Ovary (tissue), 10 donors: ENCODE measurements at regions of chr17 and their contacts with region 1.

Region 1: GRCh38 chr17:17196776-17197175 is 9.4 kb downstream of the PLD6 start:
- DNase-seq: no peak
- H3K4me3 ChIP-seq: no peak overlapping the region
- H3K27ac ChIP-seq: no peak overlapping the region
- H3K4me1 ChIP-seq: peaks cover 10% of the 10 kb centered on the region
- H3K27me3 ChIP-seq: no peaks in the 10 kb centered on the region
- CTCF ChIP-seq: no peak
- EP300 ChIP-seq: no peak
- POLR2A ChIP-seq: no peak

Region 2: GRCh38 chr17:17125136-17126084 is 71.4 kb before region 1 on chr17:
- intact Hi-C with region 1: no loop called
- DNase-seq: no peak
- H3K4me3 ChIP-seq: no peak overlapping the region
- H3K27ac ChIP-seq: no peak overlapping the region
- H3K4me1 ChIP-seq: peaks cover 6% of the 10 kb centered on the region
- H3K27me3 ChIP-seq: no peaks in the 10 kb centered on the region
- CTCF ChIP-seq: no peak
- EP300 ChIP-seq: no peak
- POLR2A ChIP-seq: no peak

Region 3: DNA sequence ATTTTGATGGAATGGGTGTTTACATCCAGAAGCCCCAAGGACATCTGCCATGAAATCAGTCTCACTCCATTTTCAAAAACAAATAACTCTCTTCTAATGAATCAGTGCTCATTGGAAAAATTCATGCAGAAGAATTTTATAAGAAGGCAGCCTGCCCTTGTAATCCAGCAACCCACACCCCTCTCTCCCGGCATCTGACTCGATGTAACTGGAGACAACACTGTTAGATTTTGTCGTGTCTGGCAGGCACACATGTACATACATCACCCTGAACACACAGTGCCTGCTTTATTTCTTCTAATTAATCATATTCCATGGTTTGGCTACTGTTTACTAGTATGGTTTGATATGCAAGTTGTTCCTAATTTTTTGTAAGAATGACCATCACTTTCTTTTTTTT is 21.2 kb after region 1 on chr17:
- intact Hi-C with region 1: loop called in 1 of 4 experiments (anchors 1 kb)
- DNase-seq: no peak
- H3K4me3 ChIP-seq: no peak overlapping the region
- H3K27ac ChIP-seq: no peak overlapping the region
- H3K4me1 ChIP-seq: no peaks in the 10 kb centered on the region
- H3K27me3 ChIP-seq: no peaks in the 10 kb centered on the region
- CTCF ChIP-seq: no peak
- EP300 ChIP-seq: no peak
- POLR2A ChIP-seq: no peak

Region 4: GRCh38 chr17:17350491-17351355 is 153.9 kb after region 1 on chr17:
- intact Hi-C with region 1: no loop called
- DNase-seq: no peak
- H3K4me3 ChIP-seq: no peak overlapping the region
- H3K27ac ChIP-seq: no peak overlapping the region
- H3K4me1 ChIP-seq: peaks cover 2% of the 10 kb centered on the region
- H3K27me3 ChIP-seq: no peaks in the 10 kb centered on the region
- CTCF ChIP-seq: no peak
- EP300 ChIP-seq: no peak
- POLR2A ChIP-seq: no peak